ENCODE measurements at regions of chr4 and their contacts with region 1.

Region 1: DNA sequence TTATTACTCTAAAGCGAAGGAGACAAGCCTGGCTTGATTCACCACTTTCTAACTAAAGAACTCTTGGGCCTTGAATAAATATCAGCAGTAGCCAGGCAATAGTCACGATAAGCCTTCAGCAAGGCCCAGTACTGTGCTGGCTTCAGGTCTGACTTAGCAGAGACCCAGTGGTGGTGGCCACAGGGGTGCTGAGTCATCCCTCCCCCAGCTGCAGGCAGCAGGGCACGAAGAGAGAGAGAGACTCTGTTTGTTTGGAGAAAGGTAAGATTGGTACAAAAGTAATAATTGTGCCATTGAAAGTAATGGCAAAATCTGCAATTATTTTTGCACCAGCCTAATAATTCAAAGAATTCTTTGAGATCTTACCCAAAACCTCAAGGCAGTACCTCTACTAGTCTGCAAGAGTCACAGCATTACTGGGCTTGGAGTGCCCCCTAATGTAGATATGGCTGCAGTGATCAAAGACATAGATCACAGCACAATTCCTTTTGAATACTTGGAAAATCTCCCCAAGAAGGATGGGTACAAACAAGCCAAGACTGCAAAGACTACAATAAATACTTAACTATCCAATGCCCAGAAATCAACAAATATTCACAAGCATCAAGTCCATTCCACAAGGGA is 159.5 kb upstream of the USP38 start:
- DNase-seq: no peak
- H3K4me3 ChIP-seq: no peak overlapping the region
- H3K4me3 Mint-ChIP-seq: no peak overlapping the region
- H3K27ac Mint-ChIP-seq: no peak overlapping the region
- H3K4me1 ChIP-seq: no peaks in the 10 kb centered on the region
- H3K4me1 Mint-ChIP-seq: peaks cover 6% of the 10 kb centered on the region
- H3K27me3 ChIP-seq: no peaks in the 10 kb centered on the region
- H3K27me3 Mint-ChIP-seq: no peaks in the 10 kb centered on the region
- CTCF ChIP-seq: no peak

Region 2: GRCh38 chr4:142952821-142953580 is 72.2 kb before region 1 on chr4:
- CTCF ChIA-PET with region 1: no interaction called
- POLR2A ChIA-PET with region 1: no interaction called
- intact Hi-C with region 1: no loop called
- DNase-seq: no peak
- H3K4me3 ChIP-seq: no peak overlapping the region
- H3K4me3 Mint-ChIP-seq: no peak overlapping the region
- H3K27ac Mint-ChIP-seq: no peak overlapping the region
- H3K4me1 ChIP-seq: no peaks in the 10 kb centered on the region
- H3K4me1 Mint-ChIP-seq: no peaks in the 10 kb centered on the region
- H3K27me3 ChIP-seq: no peaks in the 10 kb centered on the region
- H3K27me3 Mint-ChIP-seq: peaks cover 9% of the 10 kb centered on the region
- CTCF ChIP-seq: no peak

Region 3: DNA sequence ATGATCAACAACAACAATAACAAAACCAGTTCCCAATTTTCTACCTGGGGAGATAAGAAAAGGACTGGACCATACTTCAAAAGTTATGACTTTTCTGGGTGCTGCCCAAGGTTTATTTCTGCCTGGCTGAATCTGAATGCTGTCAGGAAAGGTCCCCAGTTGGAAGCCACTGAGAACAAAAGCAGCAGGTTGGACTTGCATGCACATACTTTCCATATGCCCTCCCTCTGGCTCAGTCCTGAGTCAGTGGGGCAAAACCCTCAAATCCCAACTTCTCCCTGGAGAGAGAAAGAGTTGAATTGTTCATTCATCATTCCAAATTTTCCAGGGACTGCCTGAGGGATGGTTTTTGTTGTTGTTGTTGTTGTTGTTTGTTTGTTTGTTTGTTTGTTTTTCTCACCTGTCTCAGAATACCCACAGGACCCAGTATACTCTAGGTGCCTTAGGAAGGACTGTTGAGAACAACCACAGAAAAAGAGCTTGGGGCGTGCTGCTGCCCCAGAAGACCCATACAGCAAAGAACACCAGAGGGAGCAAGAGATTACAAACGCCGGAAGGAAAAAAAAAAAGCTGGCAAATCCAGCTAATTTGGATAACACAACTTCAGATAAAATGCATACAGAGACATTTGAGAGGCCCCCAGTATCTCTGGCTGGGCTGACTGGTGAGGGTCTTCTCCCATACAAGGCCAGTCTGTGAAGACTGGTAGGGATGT is 40.2 kb before region 1 on chr4:
- CTCF ChIA-PET with region 1: interaction called, 4 read pairs
- POLR2A ChIA-PET with region 1: no interaction called
- intact Hi-C with region 1: loop called (anchors 1 kb)
- DNase-seq: peak in 1 of 2 experiments; percentile 64
- H3K4me3 ChIP-seq: no peak overlapping the region
- H3K4me3 Mint-ChIP-seq: no peak overlapping the region
- H3K27ac Mint-ChIP-seq: no peak overlapping the region
- H3K4me1 ChIP-seq: no peaks in the 10 kb centered on the region
- H3K4me1 Mint-ChIP-seq: peaks cover 13% of the 10 kb centered on the region
- H3K27me3 ChIP-seq: no peaks in the 10 kb centered on the region
- H3K27me3 Mint-ChIP-seq: no peaks in the 10 kb centered on the region
- CTCF ChIP-seq: peak; percentile 61 to 71